ENCODE measurements at regions of chr3 and their contacts with region 1.

Region 1: DNA sequence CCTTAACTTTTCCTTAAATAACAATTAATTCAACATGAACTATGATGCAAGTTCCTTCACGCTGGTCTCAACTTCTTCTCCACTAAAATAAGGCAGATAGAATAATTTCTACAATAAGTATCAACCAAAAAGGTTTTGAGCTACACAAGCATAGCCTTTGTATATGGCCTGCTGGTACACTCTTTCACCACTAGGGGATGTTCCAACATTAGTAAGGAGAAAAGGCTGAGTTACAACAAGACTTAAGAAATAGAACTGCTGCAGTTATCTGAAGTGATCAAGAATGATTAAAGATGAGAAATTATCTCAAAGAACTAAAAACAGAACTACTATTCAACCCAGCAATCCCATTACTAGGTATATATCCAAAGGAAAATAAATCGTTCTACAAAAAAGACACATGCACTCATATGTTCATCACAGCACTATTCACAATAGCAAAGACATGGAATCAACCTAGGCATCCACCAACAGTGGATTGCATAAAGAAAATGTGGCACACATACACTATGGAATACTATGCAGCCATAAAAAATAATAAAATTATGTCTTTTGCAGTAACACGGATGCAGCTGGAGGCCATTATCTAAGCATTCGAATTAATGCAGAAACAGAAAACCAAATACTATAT is 14.4 kb downstream of the ATP13A3 start:
- ATAC-seq: peak; percentile 48 to 87 (median 74)
- H3K4me3 ChIP-seq: no peak overlapping the region
- H3K27ac ChIP-seq: no peak overlapping the region
- H3K4me1 ChIP-seq: no peaks in the 10 kb centered on the region

Region 2: GRCh38 chr3:194573691-194574437 is 101.5 kb after region 1 on chr3:
- in situ Hi-C with region 1: loop called in 3 of 9 experiments (anchors 10 to 25 kb)
- ATAC-seq: peak in 5 of 8 experiments; percentile 9 to 82 (median 29)
- H3K4me3 ChIP-seq: no peak overlapping the region
- H3K27ac ChIP-seq: no peak overlapping the region
- H3K4me1 ChIP-seq: peaks cover 8 to 24% of the 10 kb centered on the region in 2 donors

Region 3: DNA sequence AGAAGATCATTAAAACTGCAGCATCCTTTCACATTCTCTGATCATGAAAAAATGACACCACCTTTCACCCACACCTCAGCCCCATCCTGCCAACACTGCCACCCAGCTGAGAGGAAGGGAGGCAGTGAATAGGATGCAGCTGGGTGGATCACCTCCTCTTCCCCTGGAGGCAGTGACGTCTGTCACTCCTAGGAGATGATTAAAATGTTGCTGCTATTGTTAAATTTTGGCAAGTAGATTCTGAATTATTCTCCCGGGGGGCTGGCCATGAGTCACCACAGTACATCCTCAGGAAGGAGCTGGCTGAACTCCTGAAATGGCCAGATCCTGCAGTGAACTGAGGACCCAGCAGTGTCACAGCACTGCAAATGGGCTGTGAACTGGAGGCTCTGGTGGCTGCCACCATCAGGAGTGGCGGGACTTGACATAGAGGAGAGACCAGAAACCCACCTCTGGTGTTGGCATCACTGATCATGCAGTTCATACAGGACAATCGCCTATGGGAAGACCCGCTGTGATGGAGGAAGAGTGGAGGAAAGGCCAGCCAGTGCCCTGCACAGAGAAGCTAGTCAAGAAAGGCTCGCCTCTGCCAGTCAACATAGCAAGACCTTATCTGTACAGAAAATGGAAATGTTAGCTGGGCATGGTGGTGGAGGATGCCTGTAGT is 412.4 kb after region 1 on chr3:
- in situ Hi-C with region 1: no loop called
- ATAC-seq: peak in 2 of 8 experiments; percentile 18 to 31
- H3K4me3 ChIP-seq: no peak overlapping the region
- H3K27ac ChIP-seq: no peak overlapping the region
- H3K4me1 ChIP-seq: peaks cover 7% of the 10 kb centered on the region in 2 donors